ENCODE measurements at regions of chr5 and their contacts with region 1.

Region 1: GRCh38 chr5:141691867-141692532 is 10.0 kb upstream of the ARAP3 start:
- DNase-seq: peak; percentile 70 to 89 (median 87)
- H3K4me3 ChIP-seq: peak overlapping the region in 5 of 7 experiments; percentile 2 to 64 (median 48)
- H3K27ac ChIP-seq: no peak overlapping the region
- H3K4me1 ChIP-seq: peaks cover 0 to 5% (median 4%) of the 10 kb centered on the region in 4 experiments
- H3K27me3 ChIP-seq: peaks cover 0 to 19% (median 15%) of the 10 kb centered on the region in 5 experiments

Region 2: DNA sequence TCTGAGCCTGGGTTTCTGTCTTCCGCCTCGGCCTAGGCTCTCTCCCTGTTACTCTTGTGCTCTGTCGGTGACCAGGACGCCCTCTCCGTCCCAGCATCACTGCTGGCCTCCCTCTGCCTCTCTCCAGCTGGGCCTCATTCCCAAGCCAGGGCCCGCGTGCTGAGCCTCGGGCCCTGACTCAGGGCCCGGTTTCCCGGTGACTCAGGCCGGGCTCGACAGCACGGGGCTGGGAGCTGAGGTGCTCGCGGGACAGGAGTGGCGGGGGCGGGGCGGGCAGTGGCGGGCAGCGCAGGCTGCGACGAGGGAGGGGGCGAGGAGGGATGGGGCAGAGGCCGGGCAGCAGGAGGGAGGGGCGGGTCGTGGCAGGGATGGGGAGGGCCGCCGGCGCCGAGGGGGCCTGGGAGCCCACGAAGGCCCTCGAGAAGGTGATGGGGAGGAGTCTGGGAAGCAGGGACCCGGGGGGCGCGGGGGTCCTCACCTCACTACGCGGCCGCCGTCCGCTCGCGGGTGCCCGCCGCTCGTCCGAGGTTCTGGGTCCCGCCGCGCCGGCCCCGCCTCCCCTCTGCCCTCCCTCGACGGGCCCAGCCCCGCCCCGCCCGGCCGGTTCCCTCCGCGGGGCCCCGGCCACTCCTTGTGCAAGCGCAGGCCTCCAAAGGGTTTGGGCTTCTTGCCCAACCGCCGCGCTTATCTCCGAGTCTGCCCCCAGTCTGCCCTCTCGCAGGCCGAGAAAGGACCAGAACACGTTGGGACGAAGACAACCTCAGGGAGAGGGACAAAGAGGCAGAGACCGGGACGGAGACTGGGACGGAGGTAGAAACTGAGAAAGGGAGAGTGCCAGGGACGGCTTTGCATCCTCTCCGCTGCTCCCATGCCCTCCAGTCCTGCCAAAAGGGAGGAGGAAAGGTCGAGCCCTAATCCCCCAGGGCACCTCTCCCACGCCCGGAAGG is 10.0 kb before region 1 on chr5 and contains the start of gene ARAP3:
- CTCF ChIA-PET with region 1: interaction called, 28 read pairs
- POLR2A ChIA-PET with region 1: no interaction called
- DNase-seq: peak; percentile 39 to 71 (median 56)
- H3K4me3 ChIP-seq: peak within 1 kb of the TSS in 6 of 7 experiments; percentile 1 to 65 (median 46)
- H3K27ac ChIP-seq: no peak within 1 kb of the TSS
- H3K4me1 ChIP-seq: peaks cover 7 to 29% (median 23%) of the 10 kb centered on the region in 4 experiments
- H3K27me3 ChIP-seq: peaks cover 0 to 16% (median 2%) of the 10 kb centered on the region in 5 experiments

Region 3: DNA sequence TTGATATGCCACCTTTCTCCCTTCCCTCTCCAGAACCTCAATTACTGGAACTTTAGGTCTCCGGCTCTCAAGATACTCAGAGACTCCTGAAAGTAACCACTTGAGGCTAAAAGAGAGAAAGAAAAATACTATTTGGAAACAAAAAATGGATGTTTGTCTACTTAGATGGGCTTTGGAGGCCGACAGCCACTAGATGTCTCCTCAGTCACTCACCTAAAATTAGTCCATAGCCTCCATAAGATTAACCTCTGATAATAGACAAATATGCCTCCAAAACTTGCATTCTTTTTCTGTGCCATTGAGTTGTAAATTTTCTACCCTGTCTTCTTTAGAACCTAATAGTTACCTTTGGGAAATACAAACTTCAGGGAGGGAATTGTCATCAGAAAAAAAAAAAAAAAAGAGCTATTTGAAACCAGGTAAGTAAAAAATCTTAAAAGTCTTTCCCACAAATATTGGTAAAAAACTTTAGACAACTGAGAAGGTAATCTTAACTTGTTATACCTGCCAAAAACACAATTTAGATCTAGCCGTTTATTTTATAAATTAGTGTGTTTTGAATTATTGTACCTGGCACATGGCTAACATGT is 197.4 kb after region 1 on chr5:
- CTCF ChIA-PET with region 1: interaction called, 101 read pairs
- POLR2A ChIA-PET with region 1: no interaction called
- DNase-seq: peak in 2 of 3 donors; percentile 41 to 43
- H3K4me3 ChIP-seq: no peak overlapping the region
- H3K27ac ChIP-seq: no peak overlapping the region
- H3K4me1 ChIP-seq: no peaks in the 10 kb centered on the region
- H3K27me3 ChIP-seq: peaks cover 7 to 22% (median 11%) of the 10 kb centered on the region in 5 experiments

Region 4: GRCh38 chr5:141923448-141924352 is 231.7 kb after region 1 on chr5 and contains the start of gene DELE1:
- CTCF ChIA-PET with region 1: interaction called, 12 read pairs
- POLR2A ChIA-PET with region 1: no interaction called
- DNase-seq: peak; percentile 92 to 96 (median 96)
- H3K4me3 ChIP-seq: peak within 1 kb of the TSS; percentile 68 to 90 (median 86)
- H3K27ac ChIP-seq: peak within 1 kb of the TSS; percentile 96 to 98
- H3K4me1 ChIP-seq: peaks cover 5 to 23% (median 16%) of the 10 kb centered on the region in 4 experiments
- H3K27me3 ChIP-seq: no peaks in the 10 kb centered on the region

Region 5: DNA sequence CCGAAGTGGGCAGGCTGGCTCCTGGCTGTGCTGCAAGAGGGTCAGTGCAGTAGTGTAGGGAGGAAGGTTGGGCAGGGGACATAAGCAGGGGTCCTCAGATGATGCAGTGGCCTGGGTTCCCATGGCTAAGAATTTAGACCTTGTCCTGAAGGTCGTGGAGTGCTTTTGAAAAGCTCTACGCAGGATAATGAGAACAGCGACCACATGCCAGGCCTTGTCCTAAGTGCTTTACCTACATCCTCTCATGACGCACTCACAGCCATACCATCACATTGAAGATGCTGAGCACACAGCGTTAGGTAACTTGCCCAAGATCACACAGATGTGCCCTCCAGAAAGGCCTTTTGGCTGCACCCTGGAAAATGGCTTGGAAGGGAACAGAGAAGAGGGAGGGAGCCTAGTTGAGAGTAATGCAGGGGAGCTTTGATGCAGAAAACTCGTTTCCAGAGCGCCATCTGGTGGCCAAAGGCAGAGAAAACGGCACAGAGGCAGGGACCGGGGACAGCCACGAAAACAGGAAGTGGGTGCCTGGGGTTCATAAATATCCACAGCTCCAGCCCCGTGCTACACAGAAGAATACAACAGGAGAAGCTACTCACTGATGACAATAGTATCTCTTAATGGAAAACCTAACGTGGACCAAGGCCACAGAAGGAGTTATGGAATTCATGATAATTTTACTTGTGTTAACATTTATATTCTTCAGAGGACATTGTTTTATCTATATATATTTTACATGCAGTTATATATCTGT is 268.6 kb after region 1 on chr5:
- CTCF ChIA-PET with region 1: interaction called, 127 read pairs
- POLR2A ChIA-PET with region 1: no interaction called
- DNase-seq: peak; percentile 87 to 95 (median 93)
- H3K4me3 ChIP-seq: no peak overlapping the region
- H3K27ac ChIP-seq: no peak overlapping the region
- H3K4me1 ChIP-seq: peaks cover 10 to 50% (median 35%) of the 10 kb centered on the region in 4 experiments
- H3K27me3 ChIP-seq: no peaks in the 10 kb centered on the region

Measured in common myeloid progenitor, CD34-positive (primary cell).